BJ (cell line): ENCODE measurements at regions of chr15 and their contacts with region 1.

Region 1: GRCh38 chr15:99213187-99213811 is 36.1 kb downstream of the TTC23 start:
- DNase-seq: peak; percentile 5
- H3K4me3 ChIP-seq: no peak overlapping the region
- H3K27me3 ChIP-seq: no peaks in the 10 kb centered on the region
- CTCF ChIP-seq: peak; percentile 92

Region 2: DNA sequence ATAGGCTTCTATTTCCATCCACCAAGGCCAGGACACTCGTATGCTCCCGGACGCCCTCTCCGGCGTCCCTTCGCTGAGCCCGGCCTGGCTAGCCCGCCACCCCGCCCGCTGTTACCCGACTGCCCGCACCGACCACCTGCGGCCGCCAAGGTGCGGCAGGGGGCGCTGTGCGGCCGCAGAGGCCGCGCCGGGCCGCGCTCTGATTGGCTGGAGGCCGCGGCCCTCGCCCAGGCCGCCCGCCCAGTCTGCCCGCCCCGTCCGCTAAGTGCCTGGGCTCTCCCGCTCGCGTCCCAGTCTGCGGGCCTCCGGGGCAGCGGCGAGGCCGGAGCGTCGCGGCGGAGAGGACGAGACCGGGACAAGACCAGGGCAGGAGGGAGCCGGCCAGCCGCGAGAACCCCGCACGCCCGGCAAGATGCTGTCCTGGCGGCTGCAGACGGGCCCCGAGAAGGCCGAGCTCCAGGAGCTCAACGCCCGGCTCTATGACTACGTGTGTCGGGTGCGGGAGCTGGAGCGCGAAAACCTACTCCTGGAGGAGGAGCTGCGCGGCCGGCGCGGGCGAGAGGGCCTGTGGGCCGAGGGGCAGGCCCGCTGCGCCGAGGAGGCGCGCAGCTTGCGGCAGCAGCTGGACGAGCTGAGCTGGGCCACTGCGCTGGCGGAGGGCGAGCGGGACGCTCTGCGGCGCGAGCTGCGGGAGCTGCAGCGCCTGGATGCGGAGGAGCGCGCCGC is 108.3 kb before region 1 on chr15 and contains the start of gene SYNM:
- CTCF ChIA-PET with region 1: interaction called, 142 read pairs
- POLR2A ChIA-PET with region 1: no interaction called
- DNase-seq: no peak
- H3K4me3 ChIP-seq: peak within 1 kb of the TSS; percentile 43
- H3K27me3 ChIP-seq: peaks cover 9% of the 10 kb centered on the region; the same call in 1 of the 2 replicates
- CTCF ChIP-seq: peak; percentile 47
- polyA plus RNA-seq, gene SYNM: 1.8 TPM in 2 replicates

Region 3: GRCh38 chr15:99110581-99111320 is 102.5 kb before region 1 on chr15:
- CTCF ChIA-PET with region 1: interaction called, 30 read pairs
- POLR2A ChIA-PET with region 1: no interaction called
- DNase-seq: no peak
- H3K4me3 ChIP-seq: no peak overlapping the region
- H3K27me3 ChIP-seq: no peaks in the 10 kb centered on the region
- CTCF ChIP-seq: no peak

Region 4: DNA sequence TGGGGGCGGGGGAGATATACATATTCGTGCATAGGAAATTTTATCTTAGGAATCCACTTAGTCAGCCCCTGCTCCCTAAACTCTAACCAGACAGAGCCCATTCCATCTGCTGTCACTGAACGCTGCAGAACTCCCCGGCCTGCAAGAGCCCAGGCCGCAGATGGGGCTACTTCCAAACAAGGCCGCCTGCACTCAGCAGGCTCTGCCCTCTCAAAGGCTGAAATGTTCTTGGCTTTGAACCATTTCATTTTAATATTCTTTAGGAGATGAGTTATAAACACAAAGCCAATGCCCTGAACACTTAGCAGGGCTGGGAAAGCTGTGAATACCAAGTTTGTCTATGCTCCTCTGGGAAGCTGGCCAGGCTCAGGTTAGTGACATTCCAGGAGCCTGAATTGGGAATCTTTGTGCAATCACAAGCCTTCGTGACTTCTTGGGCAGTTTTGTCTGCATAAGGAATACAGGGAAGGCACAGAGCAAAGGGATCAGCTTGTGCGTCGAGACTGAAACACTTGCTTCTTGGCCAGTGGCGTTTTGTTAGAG is 43.5 kb before region 1 on chr15:
- CTCF ChIA-PET with region 1: no interaction called
- POLR2A ChIA-PET with region 1: no interaction called
- DNase-seq: peak; percentile 53
- H3K4me3 ChIP-seq: no peak overlapping the region
- H3K27me3 ChIP-seq: no peaks in the 10 kb centered on the region
- CTCF ChIP-seq: no peak

Region 5: DNA sequence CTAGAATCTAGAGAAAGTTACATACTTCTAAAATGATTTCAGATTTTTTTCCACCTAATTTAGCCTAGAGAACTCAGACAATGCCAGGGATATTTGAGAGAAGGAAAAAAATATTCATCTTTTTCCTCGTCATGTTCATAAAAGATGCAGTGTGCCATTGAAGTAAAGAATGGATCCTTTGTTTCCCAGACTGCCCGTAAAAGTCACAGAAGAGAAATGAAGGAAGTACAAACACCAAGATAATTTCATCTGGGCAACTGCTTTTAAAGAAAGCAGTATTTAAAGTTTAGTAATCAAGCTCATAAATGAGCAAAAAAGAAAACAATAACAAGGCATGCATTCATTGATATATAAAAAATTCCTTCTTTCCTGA is 11.1 kb before region 1 on chr15:
- CTCF ChIA-PET with region 1: interaction called, 10 read pairs
- POLR2A ChIA-PET with region 1: no interaction called
- DNase-seq: no peak
- H3K4me3 ChIP-seq: no peak overlapping the region
- H3K27me3 ChIP-seq: no peaks in the 10 kb centered on the region
- CTCF ChIP-seq: no peak